ENCODE measurements at regions of chr11 and their contacts with region 1.

Region 1: DNA sequence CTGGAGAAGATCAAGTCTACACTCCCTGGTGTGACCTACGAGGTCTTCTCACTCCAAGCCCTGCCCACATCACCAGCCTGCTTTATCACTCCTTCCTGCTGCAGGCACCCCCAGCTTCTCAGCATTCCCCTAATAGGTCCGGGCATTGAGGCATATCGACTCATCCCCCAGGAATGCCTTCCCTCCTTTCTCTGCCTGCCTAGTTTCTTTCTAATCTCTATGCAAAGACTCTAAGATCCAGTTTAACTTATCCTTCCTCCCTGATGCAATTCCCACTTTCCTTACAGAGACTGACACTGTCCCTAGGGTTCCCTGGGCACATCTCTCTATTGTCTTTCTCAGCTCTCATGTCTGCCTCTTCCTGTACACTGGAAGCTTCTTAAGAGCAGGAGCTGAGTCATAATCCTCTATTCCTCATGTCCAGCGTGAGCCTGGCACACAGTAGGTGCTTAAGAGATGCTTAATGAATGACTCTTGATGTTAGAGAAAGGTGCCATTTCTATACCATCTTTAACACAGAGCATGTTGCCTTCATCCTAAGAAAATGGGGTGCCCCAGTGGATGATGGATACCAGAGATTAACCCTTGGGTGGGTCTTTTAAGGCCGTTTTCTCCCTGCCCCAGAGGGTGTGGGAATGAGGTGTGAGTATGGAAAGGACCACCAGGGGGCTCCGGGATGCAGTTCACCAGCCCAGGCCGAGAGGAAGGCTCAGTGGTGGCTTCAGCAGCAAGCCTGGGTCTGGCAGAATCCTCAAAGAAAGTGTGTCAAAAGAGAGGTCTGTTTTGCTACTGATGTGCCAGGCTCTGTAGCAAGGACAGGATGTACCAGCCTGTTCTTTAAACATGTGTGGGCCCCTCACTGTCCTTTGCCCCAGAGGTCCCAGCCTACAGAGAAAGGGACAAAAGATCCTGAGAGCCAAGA is 34.7 kb downstream of the PARVA start:
- DNase-seq: peak; percentile 62 to 78
- H3K4me3 ChIP-seq: no peak overlapping the region
- H3K27ac ChIP-seq: peak overlapping the region; percentile 93
- H3K4me1 ChIP-seq: peaks cover 35% of the 10 kb centered on the region
- H3K27me3 ChIP-seq: no peaks in the 10 kb centered on the region
- CTCF ChIP-seq: peak; percentile 72

Region 2: GRCh38 chr11:12224537-12224893 is 187.6 kb before region 1 on chr11:
- CTCF ChIA-PET with region 1: no interaction called
- POLR2A ChIA-PET with region 1: no interaction called
- intact Hi-C with region 1: no loop called
- DNase-seq: peak; percentile 78 to 79
- H3K4me3 ChIP-seq: peak overlapping the region; percentile 41; the same call in 1 of the 2 replicates
- H3K27ac ChIP-seq: peak overlapping the region; percentile 94
- H3K4me1 ChIP-seq: peaks cover 70% of the 10 kb centered on the region
- H3K27me3 ChIP-seq: no peaks in the 10 kb centered on the region
- CTCF ChIP-seq: no peak

Region 3: DNA sequence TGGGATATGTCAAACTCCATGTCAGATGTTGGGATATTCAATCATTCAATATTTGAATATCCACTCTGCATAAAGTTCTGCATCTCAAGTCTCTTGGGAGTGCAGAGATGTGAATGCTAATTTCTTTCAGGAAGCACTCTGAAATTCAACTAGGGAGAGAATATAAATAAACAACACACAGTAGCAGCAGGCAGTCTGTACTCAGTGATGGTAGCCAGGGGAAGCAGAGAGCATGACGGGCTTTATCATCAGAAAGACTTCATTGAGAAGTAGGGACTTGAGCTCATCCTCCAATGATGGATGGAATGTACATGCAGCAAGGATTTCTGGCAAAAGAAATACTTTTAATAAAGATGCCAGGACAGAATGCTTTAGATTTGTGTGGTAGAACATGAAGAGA is 252.3 kb after region 1 on chr11:
- CTCF ChIA-PET with region 1: no interaction called
- POLR2A ChIA-PET with region 1: no interaction called
- intact Hi-C with region 1: no loop called
- DNase-seq: no peak
- H3K4me3 ChIP-seq: no peak overlapping the region
- H3K27ac ChIP-seq: no peak overlapping the region
- H3K4me1 ChIP-seq: no peaks in the 10 kb centered on the region
- H3K27me3 ChIP-seq: no peaks in the 10 kb centered on the region
- CTCF ChIP-seq: no peak

Region 4: GRCh38 chr11:12893787-12894672 is 482.0 kb after region 1 on chr11:
- CTCF ChIA-PET with region 1: no interaction called
- POLR2A ChIA-PET with region 1: no interaction called
- intact Hi-C with region 1: loop called (anchors 10 kb)
- DNase-seq: peak; percentile 55 to 72
- H3K4me3 ChIP-seq: no peak overlapping the region
- H3K27ac ChIP-seq: no peak overlapping the region
- H3K4me1 ChIP-seq: no peaks in the 10 kb centered on the region
- H3K27me3 ChIP-seq: no peaks in the 10 kb centered on the region
- CTCF ChIP-seq: peak; percentile 85